Activated B cell treated with CpG ODN at 0.5 μM for 24 hours (primary cell): ENCODE measurements at regions of chr5 and their contacts with region 1.

Region 1: DNA sequence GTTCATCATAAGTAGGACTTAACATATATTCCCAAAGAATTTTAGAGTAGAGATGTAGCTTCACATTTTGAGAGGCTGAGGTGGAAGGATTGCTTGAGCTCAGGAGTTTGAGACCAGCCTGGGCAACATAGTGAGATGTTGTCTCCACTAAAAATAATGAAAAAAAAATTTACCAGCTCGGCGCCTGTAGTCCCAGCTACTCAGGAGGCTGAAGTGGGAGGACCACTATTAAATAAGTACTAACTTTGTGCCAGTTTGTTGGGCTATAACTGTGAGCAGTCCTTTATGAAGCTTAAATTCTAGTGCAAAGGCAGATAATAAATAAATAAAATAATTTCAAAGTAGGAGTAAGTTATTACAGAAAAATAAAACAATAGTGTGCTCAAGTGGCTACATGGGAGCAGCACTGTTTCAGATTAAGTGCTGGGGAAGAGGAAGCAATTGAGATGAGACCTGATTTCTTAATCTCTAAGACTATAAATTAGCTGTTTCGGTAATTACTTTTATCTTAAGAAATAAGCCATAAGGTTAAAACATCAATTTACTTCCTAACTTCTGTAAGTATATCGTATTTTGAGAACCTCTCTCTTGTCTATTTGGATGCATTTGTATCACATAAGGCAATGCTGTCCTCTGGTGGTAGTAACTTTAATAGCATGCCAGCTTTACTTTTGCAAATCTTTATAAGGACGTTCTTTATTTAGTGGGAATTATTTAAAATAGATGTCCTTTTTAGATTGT is 98.9 kb downstream of the CSNK1G3 start:
- DNase-seq: no peak
- ATAC-seq: peak; percentile 73
- H3K4me3 Mint-ChIP-seq: no peak overlapping the region
- H3K27ac Mint-ChIP-seq: peak overlapping the region; percentile 72
- H3K4me1 Mint-ChIP-seq: peaks cover 7% of the 10 kb centered on the region
- H3K27me3 Mint-ChIP-seq: no peaks in the 10 kb centered on the region
- CTCF ChIP-seq: peak; percentile 100

Region 2: GRCh38 chr5:122192497-122193496 is 1418.0 kb before region 1 on chr5:
- CTCF ChIA-PET with region 1: interaction called, 3 read pairs
- POLR2A ChIA-PET with region 1: no interaction called
- intact Hi-C with region 1: loop called (anchors 2 kb)
- DNase-seq: no peak
- ATAC-seq: peak; percentile 42
- H3K4me3 Mint-ChIP-seq: no peak overlapping the region
- H3K27ac Mint-ChIP-seq: no peak overlapping the region
- H3K4me1 Mint-ChIP-seq: no peaks in the 10 kb centered on the region
- H3K27me3 Mint-ChIP-seq: peaks cover 17% of the 10 kb centered on the region
- CTCF ChIP-seq: no peak

Region 3: DNA sequence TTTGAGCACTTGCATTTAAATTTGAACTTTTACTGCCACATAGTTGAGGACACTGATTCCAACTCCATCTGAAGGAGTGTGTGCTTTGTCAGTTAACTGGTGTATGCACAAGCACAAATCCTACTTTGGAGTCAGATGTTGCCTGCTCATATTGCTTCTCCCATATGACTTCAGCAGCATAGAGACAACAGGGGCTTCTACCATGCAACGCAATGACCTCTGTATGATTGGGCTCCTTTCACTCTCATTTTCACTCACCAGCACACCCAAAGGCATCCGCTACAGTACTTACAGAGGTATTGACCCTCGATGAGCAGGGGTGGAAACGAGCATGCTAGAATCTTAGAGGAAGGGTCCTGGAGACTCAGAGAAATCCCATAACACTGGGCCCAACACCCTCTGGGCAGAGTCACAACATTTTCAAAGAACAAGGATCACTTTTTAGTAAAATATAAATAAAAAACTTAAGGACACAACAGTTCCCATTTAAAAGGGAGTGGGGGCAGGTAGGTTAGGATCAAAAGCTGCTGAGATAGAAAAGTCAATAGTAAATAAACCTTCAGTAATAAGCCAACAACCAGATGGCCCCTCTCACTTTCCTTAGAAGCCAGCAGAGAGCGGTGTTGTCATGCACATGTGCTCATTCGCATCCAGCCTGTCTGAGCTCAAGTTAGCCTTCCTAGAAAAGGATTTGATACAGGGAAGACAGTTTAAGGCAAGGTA is 1095.0 kb before region 1 on chr5:
- CTCF ChIA-PET with region 1: interaction called, 14 read pairs
- POLR2A ChIA-PET with region 1: no interaction called
- intact Hi-C with region 1: loop called (anchors 1 kb)
- DNase-seq: peak; percentile 17
- ATAC-seq: peak; percentile 79
- H3K4me3 Mint-ChIP-seq: no peak overlapping the region
- H3K27ac Mint-ChIP-seq: no peak overlapping the region
- H3K4me1 Mint-ChIP-seq: peaks cover 8% of the 10 kb centered on the region
- H3K27me3 Mint-ChIP-seq: peaks cover 2% of the 10 kb centered on the region
- CTCF ChIP-seq: no peak

Region 4: GRCh38 chr5:123089914-123090670 is 520.7 kb before region 1 on chr5:
- CTCF ChIA-PET with region 1: no interaction called
- POLR2A ChIA-PET with region 1: no interaction called
- intact Hi-C with region 1: loop called (anchors 1 kb)
- DNase-seq: no peak
- ATAC-seq: peak; percentile 31
- H3K4me3 Mint-ChIP-seq: peak overlapping the region; percentile 41
- H3K27ac Mint-ChIP-seq: no peak overlapping the region
- H3K4me1 Mint-ChIP-seq: peaks cover 50% of the 10 kb centered on the region
- H3K27me3 Mint-ChIP-seq: peaks cover 67% of the 10 kb centered on the region
- CTCF ChIP-seq: no peak

Region 5: GRCh38 chr5:123398058-123398733 is 212.6 kb before region 1 on chr5:
- CTCF ChIA-PET with region 1: interaction called, 10 read pairs
- POLR2A ChIA-PET with region 1: no interaction called
- intact Hi-C with region 1: loop called (anchors 1 kb)
- DNase-seq: peak; percentile 15
- ATAC-seq: peak; percentile 98
- H3K4me3 Mint-ChIP-seq: peak overlapping the region; percentile 7
- H3K27ac Mint-ChIP-seq: peak overlapping the region; percentile 89
- H3K4me1 Mint-ChIP-seq: peaks cover 26% of the 10 kb centered on the region
- H3K27me3 Mint-ChIP-seq: no peaks in the 10 kb centered on the region
- CTCF ChIP-seq: no peak

Region 6: GRCh38 chr5:123582550-123583285 is 28.1 kb before region 1 on chr5:
- CTCF ChIA-PET with region 1: no interaction called
- POLR2A ChIA-PET with region 1: no interaction called
- intact Hi-C with region 1: no loop called
- DNase-seq: no peak
- ATAC-seq: no peak
- H3K4me3 Mint-ChIP-seq: no peak overlapping the region
- H3K27ac Mint-ChIP-seq: no peak overlapping the region
- H3K4me1 Mint-ChIP-seq: peaks cover 2% of the 10 kb centered on the region
- H3K27me3 Mint-ChIP-seq: no peaks in the 10 kb centered on the region
- CTCF ChIP-seq: no peak